GM12878 (cell line): ENCODE measurements at regions of chr1 and their contacts with region 1.

Region 1: GRCh38 chr1:210373885-210374599 is 45.3 kb downstream of the HHAT start:
- DNase-seq: peak; percentile 81
- ATAC-seq: peak; percentile 84
- H3K4me3 ChIP-seq: no peak overlapping the region
- H3K27ac ChIP-seq: peak overlapping the region; percentile 40; the same call in 1 of the 2 replicates
- H3K4me1 ChIP-seq: no peaks in the 10 kb centered on the region
- H3K27me3 ChIP-seq: no peaks in the 10 kb centered on the region
- CTCF ChIP-seq: peak; percentile 81 to 90 (median 87)
- EP300 ChIP-seq: no peak
- POLR2A ChIP-seq: peak; percentile 82
- RAD21 ChIP-seq: peak; percentile 38

Region 2: GRCh38 chr1:210342986-210343780 is 30.9 kb before region 1 on chr1:
- CTCF ChIA-PET with region 1: interaction called, 35 read pairs
- POLR2A ChIA-PET with region 1: interaction called, 29 read pairs
- RAD21 ChIA-PET with region 1: interaction called, 51 read pairs
- SMC1A ChIA-PET with region 1: interaction called, 56 read pairs
- in situ Hi-C with region 1: no loop called
- intact Hi-C with region 1: no loop called
- DNase-seq: peak; percentile 72
- ATAC-seq: peak; percentile 75
- H3K4me3 ChIP-seq: peak overlapping the region; percentile 59
- H3K27ac ChIP-seq: peak overlapping the region; percentile 53
- H3K4me1 ChIP-seq: peaks cover 23% of the 10 kb centered on the region
- H3K27me3 ChIP-seq: no peaks in the 10 kb centered on the region
- CTCF ChIP-seq: no peak
- EP300 ChIP-seq: peak; percentile 70; a peak in 2 of 4 replicates
- POLR2A ChIP-seq: no peak
- RAD21 ChIP-seq: no peak

Region 3: DNA sequence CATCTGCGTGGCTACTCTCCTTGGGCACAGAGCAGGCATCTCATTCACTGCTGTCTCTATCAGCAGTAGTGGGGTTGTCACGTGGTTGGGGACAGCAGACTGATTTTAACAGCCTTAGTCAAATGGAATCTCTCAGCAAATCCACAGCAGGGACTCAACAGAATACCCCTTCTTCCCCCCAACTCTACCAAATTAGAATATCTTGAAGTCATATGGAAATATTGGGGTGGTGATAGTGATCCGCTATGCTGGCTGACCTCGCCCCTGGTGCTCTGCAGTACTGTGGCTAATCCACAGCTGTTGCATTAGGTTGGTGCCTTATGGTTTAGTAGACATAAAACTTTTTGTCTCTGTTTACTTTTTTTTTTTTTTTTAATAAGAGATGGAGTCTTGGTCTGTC is 21.5 kb before region 1 on chr1:
- CTCF ChIA-PET with region 1: interaction called, 24 read pairs
- POLR2A ChIA-PET with region 1: interaction called, 5 read pairs
- RAD21 ChIA-PET with region 1: interaction called, 4 read pairs
- SMC1A ChIA-PET with region 1: interaction called, 7 read pairs
- in situ Hi-C with region 1: no loop called
- intact Hi-C with region 1: no loop called
- DNase-seq: no peak
- ATAC-seq: peak; percentile 40; the same call in 1 of the 3 replicates
- H3K4me3 ChIP-seq: no peak overlapping the region
- H3K27ac ChIP-seq: no peak overlapping the region
- H3K4me1 ChIP-seq: no peaks in the 10 kb centered on the region
- H3K27me3 ChIP-seq: no peaks in the 10 kb centered on the region
- CTCF ChIP-seq: no peak
- EP300 ChIP-seq: no peak
- POLR2A ChIP-seq: no peak
- RAD21 ChIP-seq: no peak

Region 4: GRCh38 chr1:210360852-210361477 is 13.1 kb before region 1 on chr1:
- CTCF ChIA-PET with region 1: interaction called, 71 read pairs
- POLR2A ChIA-PET with region 1: interaction called, 10 read pairs
- RAD21 ChIA-PET with region 1: interaction called, 17 read pairs
- SMC1A ChIA-PET with region 1: interaction called, 55 read pairs
- in situ Hi-C with region 1: no loop called
- intact Hi-C with region 1: no loop called
- DNase-seq: no peak
- ATAC-seq: peak; percentile 96
- H3K4me3 ChIP-seq: no peak overlapping the region
- H3K27ac ChIP-seq: no peak overlapping the region
- H3K4me1 ChIP-seq: no peaks in the 10 kb centered on the region
- H3K27me3 ChIP-seq: no peaks in the 10 kb centered on the region
- CTCF ChIP-seq: peak; percentile 44 to 71 (median 57)
- EP300 ChIP-seq: peak in 1 of 2 experiments; percentile 36; a peak in 1 of 4 replicates
- POLR2A ChIP-seq: no peak
- RAD21 ChIP-seq: peak; percentile 64

Region 5: DNA sequence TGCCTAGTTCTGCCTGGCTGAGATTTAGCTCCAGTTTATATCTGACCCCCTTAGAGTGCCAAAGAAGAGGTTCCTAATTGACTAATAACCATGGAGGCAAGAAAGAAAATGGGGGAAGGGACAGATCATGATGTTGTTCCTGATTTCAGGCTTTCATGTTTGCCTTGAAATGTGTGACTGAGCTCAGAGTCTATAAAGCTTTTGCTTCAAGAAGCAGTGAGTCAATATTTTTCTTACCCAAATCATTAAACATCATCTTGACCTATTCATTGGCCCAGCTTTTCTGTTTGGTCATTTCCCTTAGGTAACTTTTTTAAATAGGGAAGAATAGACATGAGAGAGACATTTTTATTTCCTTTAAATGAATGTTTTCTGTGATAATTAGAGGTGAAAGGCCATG is 10.6 kb after region 1 on chr1:
- CTCF ChIA-PET with region 1: interaction called, 39 read pairs
- POLR2A ChIA-PET with region 1: interaction called, 23 read pairs
- RAD21 ChIA-PET with region 1: interaction called, 59 read pairs
- SMC1A ChIA-PET with region 1: interaction called, 683 read pairs
- in situ Hi-C with region 1: no loop called
- intact Hi-C with region 1: no loop called
- DNase-seq: no peak
- ATAC-seq: no peak
- H3K4me3 ChIP-seq: no peak overlapping the region
- H3K27ac ChIP-seq: no peak overlapping the region
- H3K4me1 ChIP-seq: no peaks in the 10 kb centered on the region
- H3K27me3 ChIP-seq: no peaks in the 10 kb centered on the region
- CTCF ChIP-seq: no peak
- EP300 ChIP-seq: no peak
- POLR2A ChIP-seq: no peak
- RAD21 ChIP-seq: no peak

Region 6: DNA sequence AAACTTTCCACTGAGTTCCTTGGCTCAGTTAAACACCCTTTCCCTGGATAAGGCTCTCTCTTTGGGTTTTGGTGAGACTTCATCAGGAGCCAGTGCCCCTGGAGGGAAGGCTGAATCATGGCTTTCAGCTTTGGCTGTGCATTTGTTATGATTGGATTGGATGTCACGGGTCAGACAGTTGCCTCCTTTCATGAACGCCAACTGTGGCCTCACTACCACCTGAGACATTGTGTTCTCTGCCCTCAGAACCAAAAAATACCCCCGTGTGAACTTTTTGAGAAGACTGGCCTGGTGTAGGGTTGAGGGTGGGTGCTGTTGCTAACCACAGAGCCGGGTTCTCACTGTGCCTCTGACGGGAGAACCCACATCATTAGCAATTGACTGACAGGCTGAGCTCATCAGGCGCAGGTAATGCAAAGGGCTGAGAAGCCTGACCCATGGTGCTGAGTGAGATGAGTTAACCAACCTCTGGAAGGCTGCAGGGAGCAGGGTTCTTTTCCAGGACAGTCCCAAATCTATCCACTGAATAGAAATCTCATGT is 20.3 kb after region 1 on chr1:
- CTCF ChIA-PET with region 1: interaction called, 379 read pairs
- POLR2A ChIA-PET with region 1: interaction called, 224 read pairs
- RAD21 ChIA-PET with region 1: interaction called, 415 read pairs
- SMC1A ChIA-PET with region 1: interaction called, 683 read pairs
- in situ Hi-C with region 1: no loop called
- intact Hi-C with region 1: no loop called
- DNase-seq: peak; percentile 80
- ATAC-seq: peak; percentile 80
- H3K4me3 ChIP-seq: no peak overlapping the region
- H3K27ac ChIP-seq: no peak overlapping the region
- H3K4me1 ChIP-seq: no peaks in the 10 kb centered on the region
- H3K27me3 ChIP-seq: no peaks in the 10 kb centered on the region
- CTCF ChIP-seq: no peak
- EP300 ChIP-seq: peak; percentile 85 to 87; a peak in 3 of 4 replicates
- POLR2A ChIP-seq: no peak
- RAD21 ChIP-seq: no peak

Region 7: GRCh38 chr1:210434223-210434622 is 60.2 kb after region 1 on chr1:
- CTCF ChIA-PET with region 1: no interaction called
- POLR2A ChIA-PET with region 1: no interaction called
- RAD21 ChIA-PET with region 1: no interaction called
- SMC1A ChIA-PET with region 1: no interaction called
- in situ Hi-C with region 1: no loop called
- intact Hi-C with region 1: no loop called
- DNase-seq: no peak
- ATAC-seq: no peak
- H3K4me3 ChIP-seq: no peak overlapping the region
- H3K27ac ChIP-seq: no peak overlapping the region
- H3K4me1 ChIP-seq: no peaks in the 10 kb centered on the region
- H3K27me3 ChIP-seq: no peaks in the 10 kb centered on the region
- CTCF ChIP-seq: no peak
- EP300 ChIP-seq: no peak
- POLR2A ChIP-seq: no peak
- RAD21 ChIP-seq: no peak